Ascending aorta (tissue), 2 donors: ENCODE measurements at regions of chr7 and their contacts with region 1.

Region 1: DNA sequence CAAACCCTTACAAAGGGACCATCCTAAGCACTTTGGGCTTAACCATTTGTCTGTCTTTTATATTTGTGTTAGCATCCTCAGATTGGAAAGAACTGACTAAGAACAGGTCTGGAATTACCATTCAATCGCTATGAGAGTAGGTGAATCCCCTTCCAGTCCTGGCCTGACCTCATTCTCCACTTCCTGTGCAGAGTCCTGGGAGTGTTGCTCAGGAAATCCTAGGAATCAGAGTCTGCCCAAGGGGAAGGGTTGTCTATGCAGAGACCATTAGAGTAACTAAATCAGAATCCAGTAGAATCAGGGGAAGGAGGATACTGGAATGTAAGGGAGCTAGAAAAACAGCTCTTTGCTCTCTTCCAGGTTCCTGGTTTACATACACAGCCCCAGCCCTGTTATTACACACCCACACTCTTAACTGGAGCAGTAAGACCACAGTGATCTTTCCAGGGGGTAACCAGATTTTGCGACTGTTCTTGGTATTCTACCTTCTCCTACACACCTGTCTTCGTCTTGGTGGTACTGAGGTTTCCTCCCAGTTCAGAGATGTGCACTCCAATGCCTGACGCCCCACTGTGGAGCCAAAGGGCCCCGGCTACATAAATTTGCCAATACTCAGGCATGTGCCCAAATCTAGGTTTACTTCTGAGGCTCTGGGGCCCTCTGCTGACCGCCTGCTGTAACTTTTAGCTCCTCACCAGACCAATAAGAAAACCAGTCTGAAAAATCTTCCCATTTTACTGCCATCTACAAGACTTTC is 103.7 kb downstream of the RNF216 start:
- DNase-seq: peak in 1 of 2 donors; percentile 80
- H3K4me3 ChIP-seq: no peak overlapping the region
- H3K27ac ChIP-seq: peak overlapping the region in 1 of 2 donors; percentile 10
- H3K4me1 ChIP-seq: peaks cover 6 to 24% of the 10 kb centered on the region in 2 donors
- H3K27me3 ChIP-seq: no peaks in the 10 kb centered on the region
- CTCF ChIP-seq: peak; percentile 68 to 84 (median 73)

Region 2: DNA sequence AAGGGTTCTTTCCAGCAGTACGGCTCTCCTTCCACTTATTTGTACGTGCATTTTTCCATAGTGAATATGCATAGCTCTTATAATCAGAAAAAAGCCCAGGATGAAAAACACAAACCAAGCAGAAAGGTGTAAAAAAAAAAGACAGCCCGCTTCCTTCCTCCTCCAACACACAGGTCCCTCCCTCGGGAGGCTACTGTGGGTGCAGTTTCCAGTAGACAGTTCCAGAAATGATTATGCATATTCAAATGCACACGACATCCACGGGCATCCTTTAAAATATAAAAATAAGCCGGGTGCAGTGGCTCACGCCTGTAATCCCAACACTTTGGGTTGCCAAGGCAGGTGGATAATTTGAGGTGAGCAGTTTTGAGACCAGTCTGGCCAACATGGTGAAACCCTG is 314.0 kb before region 1 on chr7:
- intact Hi-C with region 1: loop called (anchors 10 kb)
- DNase-seq: no peak
- H3K4me3 ChIP-seq: no peak overlapping the region
- H3K27ac ChIP-seq: no peak overlapping the region
- H3K4me1 ChIP-seq: peaks cover 0 to 11% of the 10 kb centered on the region in 2 donors
- H3K27me3 ChIP-seq: no peaks in the 10 kb centered on the region
- CTCF ChIP-seq: no peak